Calu3 (cell line): ENCODE measurements at regions of chr10 and their contacts with region 1.

Region 1: GRCh38 chr10:98858525-98858924 is 377.1 kb downstream of the HPSE2 start:
- DNase-seq: no peak
- H3K4me3 Mint-ChIP-seq: no peak overlapping the region
- H3K27ac Mint-ChIP-seq: no peak overlapping the region
- H3K4me1 Mint-ChIP-seq: no peaks in the 10 kb centered on the region
- H3K27me3 Mint-ChIP-seq: no peaks in the 10 kb centered on the region
- CTCF ChIP-seq: no peak

Region 2: DNA sequence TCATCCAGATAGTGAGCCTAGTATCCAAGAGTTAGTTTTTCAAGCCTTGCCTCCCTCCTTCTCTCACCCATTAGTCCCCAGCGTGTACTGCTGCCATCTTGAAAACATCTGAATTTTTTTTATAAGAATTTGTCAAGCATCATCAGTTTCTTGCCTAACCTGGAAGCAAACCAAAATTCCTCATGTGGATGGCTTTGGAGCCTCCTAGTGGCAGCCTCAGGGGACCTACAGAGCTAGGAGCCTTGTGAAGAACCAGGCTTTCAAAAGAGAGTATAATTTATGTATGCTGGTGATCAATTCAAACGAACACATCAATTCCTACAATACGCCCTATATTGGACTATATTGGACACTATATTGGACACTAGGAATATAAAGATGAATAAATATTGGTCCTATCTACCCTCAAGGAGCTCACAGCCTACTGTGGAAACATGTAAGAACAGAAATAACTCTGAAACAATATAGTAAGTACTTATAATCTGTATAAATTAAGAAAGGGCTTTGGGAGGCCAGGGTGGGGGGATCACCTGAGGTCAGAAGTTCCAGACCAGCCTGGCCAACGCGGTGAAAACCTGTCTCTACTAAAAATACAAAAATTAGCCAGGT is 313.7 kb after region 1 on chr10:
- CTCF ChIA-PET with region 1: no interaction called
- intact Hi-C with region 1: loop called (anchors 5 kb)
- DNase-seq: peak; percentile 35
- H3K4me3 Mint-ChIP-seq: no peak overlapping the region
- H3K27ac Mint-ChIP-seq: no peak overlapping the region
- H3K4me1 Mint-ChIP-seq: no peaks in the 10 kb centered on the region
- H3K27me3 Mint-ChIP-seq: peaks cover 20% of the 10 kb centered on the region
- CTCF ChIP-seq: peak; percentile 45